H1 (cell line): ENCODE measurements at regions of chr7 and their contacts with region 1.

Region 1: GRCh38 chr7:5450549-5451372 is 27.1 kb upstream of the TNRC18 start:
- DNase-seq: peak in 1 of 2 experiments; percentile 89
- H3K4me3 ChIP-seq: no peak overlapping the region
- H3K27ac ChIP-seq: no peak overlapping the region
- H3K4me1 ChIP-seq: peaks cover 0 to 8% (median 2%) of the 10 kb centered on the region in 4 experiments; a peak in 5 of 7 replicates
- H3K27me3 ChIP-seq: no peaks in the 10 kb centered on the region
- CTCF ChIP-seq: peak; percentile 69 to 75 (median 73)
- EP300 ChIP-seq: no peak
- POLR2A ChIP-seq: no peak
- RAD21 ChIP-seq: peak; percentile 86 to 94

Region 2: DNA sequence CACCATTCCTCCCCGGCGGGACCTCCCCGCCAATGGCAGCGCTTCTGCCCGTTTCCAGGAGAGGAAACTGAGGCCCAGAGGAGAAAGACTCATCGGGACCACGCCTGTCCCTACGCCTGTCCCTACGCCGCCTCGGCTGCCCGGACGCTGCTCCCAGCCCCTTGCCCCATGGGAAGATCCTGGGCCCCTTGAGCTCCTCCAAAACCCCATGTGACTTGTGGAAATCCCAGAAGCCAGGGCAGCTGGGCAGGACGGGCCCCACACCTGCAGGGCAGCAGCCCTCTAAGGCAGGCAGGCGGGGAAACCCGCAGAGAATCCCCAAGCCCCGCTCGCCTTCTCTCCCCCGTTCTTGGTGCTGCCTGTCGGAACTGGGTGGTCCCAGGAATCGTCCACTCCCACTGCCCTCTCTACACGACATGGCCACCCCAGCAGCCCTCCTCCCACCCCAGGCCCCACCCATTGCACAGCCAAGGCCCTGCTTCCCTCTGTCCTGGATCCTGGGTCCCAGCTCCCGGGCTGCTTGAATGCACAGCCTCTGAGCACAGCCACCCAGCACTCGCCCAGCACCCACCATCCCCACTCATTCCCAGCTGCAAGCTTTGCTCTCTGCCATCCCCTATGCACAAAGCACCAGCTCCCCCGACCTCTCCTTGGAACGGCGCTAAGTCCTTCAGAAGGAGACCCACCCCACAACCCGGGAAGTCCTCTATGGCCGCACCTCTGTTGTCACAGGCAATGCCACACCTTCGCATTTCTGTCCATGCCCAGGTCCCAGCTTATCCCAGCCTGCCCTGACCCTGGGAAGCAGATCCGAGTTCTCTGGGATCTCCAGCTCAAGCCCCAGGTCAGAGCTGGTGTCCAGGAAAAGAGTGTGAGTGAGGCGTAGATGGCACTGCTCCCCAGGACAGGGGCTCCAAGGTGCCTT is 117.4 kb before region 1 on chr7:
- CTCF ChIA-PET with region 1: no interaction called
- POLR2A ChIA-PET with region 1: no interaction called
- DNase-seq: no peak
- H3K4me3 ChIP-seq: no peak overlapping the region
- H3K27ac ChIP-seq: no peak overlapping the region; the same call in 1 of the 2 replicates
- H3K4me1 ChIP-seq: peaks cover 0 to 4% (median 0%) of the 10 kb centered on the region in 4 experiments; a peak in 1 of 7 replicates
- H3K27me3 ChIP-seq: no peaks in the 10 kb centered on the region
- CTCF ChIP-seq: no peak
- EP300 ChIP-seq: no peak
- POLR2A ChIP-seq: no peak
- RAD21 ChIP-seq: no peak

Region 3: DNA sequence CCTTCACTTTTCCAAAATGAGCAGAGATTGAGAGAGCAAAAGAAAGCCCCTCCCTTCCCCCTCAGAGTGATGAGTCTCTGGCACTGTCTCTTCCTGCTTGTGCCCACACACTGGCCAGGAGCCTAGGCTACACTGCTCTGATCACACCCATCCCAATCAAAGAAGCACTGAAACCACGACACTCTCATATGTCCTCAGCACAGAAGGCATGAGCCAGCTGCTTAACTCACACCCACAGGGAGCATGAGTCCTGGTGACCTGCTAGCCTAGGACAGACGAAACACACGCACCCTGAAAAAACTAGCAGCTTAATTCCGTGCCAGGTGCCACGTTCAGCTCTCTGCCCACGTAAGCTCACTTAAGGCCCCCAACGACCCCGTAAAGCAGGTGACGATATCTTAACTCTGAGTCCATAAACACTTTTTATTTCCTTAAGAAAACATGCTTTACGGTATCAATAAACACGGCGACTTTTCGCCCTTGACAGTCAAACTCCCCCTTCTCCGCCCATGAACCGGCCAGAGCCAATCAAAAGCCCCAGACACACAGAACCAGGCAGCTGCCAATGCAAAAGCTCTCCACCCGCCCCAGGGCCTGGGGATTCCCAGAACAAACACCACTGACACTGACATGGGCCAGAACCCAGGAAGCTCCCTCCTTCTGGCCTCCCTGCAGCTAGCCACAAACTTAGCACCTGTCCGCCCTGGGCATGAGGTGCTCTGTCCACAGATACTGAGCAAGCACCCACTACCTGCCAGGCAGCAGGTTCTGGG is 96.1 kb before region 1 on chr7:
- CTCF ChIA-PET with region 1: interaction called, 10 read pairs
- POLR2A ChIA-PET with region 1: no interaction called
- DNase-seq: no peak
- H3K4me3 ChIP-seq: no peak overlapping the region
- H3K27ac ChIP-seq: no peak overlapping the region
- H3K4me1 ChIP-seq: peaks cover 2 to 19% (median 11%) of the 10 kb centered on the region in 4 experiments
- H3K27me3 ChIP-seq: peaks cover 11 to 36% (median 35%) of the 10 kb centered on the region in 4 experiments
- CTCF ChIP-seq: no peak
- EP300 ChIP-seq: no peak
- POLR2A ChIP-seq: no peak
- RAD21 ChIP-seq: no peak

Region 4: GRCh38 chr7:5406957-5407945 is 43.5 kb before region 1 on chr7:
- CTCF ChIA-PET with region 1: interaction called, 17 read pairs
- POLR2A ChIA-PET with region 1: interaction called, 4 read pairs
- DNase-seq: peak; percentile 79 to 89
- H3K4me3 ChIP-seq: peak overlapping the region in 3 of 4 experiments; percentile 4 to 35 (median 15); a peak in 4 of 8 replicates
- H3K27ac ChIP-seq: no peak overlapping the region
- H3K4me1 ChIP-seq: peaks cover 5 to 14% (median 13%) of the 10 kb centered on the region in 4 experiments
- H3K27me3 ChIP-seq: peaks cover 5 to 27% (median 19%) of the 10 kb centered on the region in 4 experiments
- CTCF ChIP-seq: peak in 2 of 3 experiments; percentile 19 to 20; a peak in 2 of 4 replicates
- EP300 ChIP-seq: peak in 1 of 2 experiments; percentile 31; a peak in 1 of 3 replicates
- POLR2A ChIP-seq: no peak
- RAD21 ChIP-seq: no peak; a peak in 1 of 4 replicates

Region 5: GRCh38 chr7:5435289-5436002 is 15.3 kb before region 1 on chr7:
- CTCF ChIA-PET with region 1: interaction called, 39 read pairs
- POLR2A ChIA-PET with region 1: interaction called, 5 read pairs
- DNase-seq: no peak
- H3K4me3 ChIP-seq: no peak overlapping the region
- H3K27ac ChIP-seq: no peak overlapping the region
- H3K4me1 ChIP-seq: peaks cover 0 to 2% (median 0%) of the 10 kb centered on the region in 4 experiments; a peak in 2 of 7 replicates
- H3K27me3 ChIP-seq: peaks cover 2 to 14% (median 9%) of the 10 kb centered on the region in 4 experiments
- CTCF ChIP-seq: no peak
- EP300 ChIP-seq: no peak
- POLR2A ChIP-seq: no peak
- RAD21 ChIP-seq: no peak

Region 6: GRCh38 chr7:5477723-5478531 is 27.2 kb after region 1 on chr7:
- CTCF ChIA-PET with region 1: interaction called, 21 read pairs
- POLR2A ChIA-PET with region 1: no interaction called
- DNase-seq: peak in 1 of 2 experiments; percentile 76
- H3K4me3 ChIP-seq: 0 out of 8 replicates have a peak overlapping the region, but pooled peaks of 1 of the 4 experiments have one; percentile 25
- H3K27ac ChIP-seq: no peak overlapping the region
- H3K4me1 ChIP-seq: peaks cover 0 to 16% (median 8%) of the 10 kb centered on the region in 4 experiments; a peak in 5 of 7 replicates
- H3K27me3 ChIP-seq: no peaks in the 10 kb centered on the region
- CTCF ChIP-seq: peak in 2 of 3 experiments; percentile 56 to 59; a peak in 3 of 4 replicates
- EP300 ChIP-seq: no peak
- POLR2A ChIP-seq: no peak
- RAD21 ChIP-seq: peak; percentile 39 to 49

Region 7: GRCh38 chr7:5514440-5515035 is 63.8 kb after region 1 on chr7:
- CTCF ChIA-PET with region 1: no interaction called
- POLR2A ChIA-PET with region 1: no interaction called
- DNase-seq: no peak
- H3K4me3 ChIP-seq: peak overlapping the region; percentile 75 to 97 (median 94)
- H3K27ac ChIP-seq: 0 out of 2 replicates have a peak overlapping the region, but pooled peaks have one; percentile 97
- H3K4me1 ChIP-seq: peaks cover 0 to 5% (median 1%) of the 10 kb centered on the region in 4 experiments; a peak in 5 of 7 replicates
- H3K27me3 ChIP-seq: no peaks in the 10 kb centered on the region
- CTCF ChIP-seq: no peak
- EP300 ChIP-seq: no peak
- POLR2A ChIP-seq: no peak
- RAD21 ChIP-seq: no peak

Region 8: GRCh38 chr7:5629941-5630340 is 179.2 kb after region 1 on chr7:
- CTCF ChIA-PET with region 1: no interaction called
- POLR2A ChIA-PET with region 1: no interaction called
- DNase-seq: peak in 1 of 2 experiments; percentile 46
- H3K4me3 ChIP-seq: no peak overlapping the region
- H3K27ac ChIP-seq: no peak overlapping the region
- H3K4me1 ChIP-seq: peaks cover 11 to 23% (median 14%) of the 10 kb centered on the region in 4 experiments
- H3K27me3 ChIP-seq: no peaks in the 10 kb centered on the region; a peak in 1 of 7 replicates
- CTCF ChIP-seq: no peak
- EP300 ChIP-seq: no peak
- POLR2A ChIP-seq: no peak
- RAD21 ChIP-seq: no peak

Region 9: GRCh38 chr7:5822742-5823503 is 372.2 kb after region 1 on chr7:
- CTCF ChIA-PET with region 1: no interaction called
- POLR2A ChIA-PET with region 1: no interaction called
- DNase-seq: peak; percentile 60 to 94
- H3K4me3 ChIP-seq: peak overlapping the region; percentile 40 to 81 (median 72)
- H3K27ac ChIP-seq: no peak overlapping the region
- H3K4me1 ChIP-seq: no peaks in the 10 kb centered on the region; a peak in 1 of 7 replicates
- H3K27me3 ChIP-seq: no peaks in the 10 kb centered on the region
- CTCF ChIP-seq: no peak
- EP300 ChIP-seq: no peak
- POLR2A ChIP-seq: no peak; a peak in 1 of 3 replicates
- RAD21 ChIP-seq: no peak